Activated T-helper 1 cell treated with anti-CD3 and anti-CD28 coated beads, Interleukin-12 subunit alpha, Interleukin-12 subunit beta, Interleukin-2, Interleukin-4 antibody, amounts not matched to agents 30 ng/mL and 10 ng/mL and 1 ng/mL, durations not matched to agents 14 hours and 24 hours and 36 hours (primary cell): ENCODE measurements at regions of chr13 and their contacts with region 1.

Region 1: GRCh38 chr13:99501184-99501847 is at the start of gene TM9SF2:
- DNase-seq: peak; percentile 95
- H3K4me3 Mint-ChIP-seq: peak within 1 kb of the TSS; percentile 96
- H3K27ac Mint-ChIP-seq: peak within 1 kb of the TSS; percentile 95
- H3K4me1 Mint-ChIP-seq: peaks cover 70% of the 10 kb centered on the region
- H3K27me3 Mint-ChIP-seq: peaks cover 1% of the 10 kb centered on the region
- total RNA-seq, gene TM9SF2: 59.1 and 62.6 TPM in 2 replicates

Region 2: GRCh38 chr13:97975848-97976609 is 1525.3 kb before region 1 on chr13:
- intact Hi-C with region 1: loop called (anchors 2 kb)
- DNase-seq: peak; percentile 88
- H3K4me3 Mint-ChIP-seq: peak overlapping the region; percentile 93
- H3K27ac Mint-ChIP-seq: peak overlapping the region; percentile 98
- H3K4me1 Mint-ChIP-seq: peaks cover 33% of the 10 kb centered on the region
- H3K27me3 Mint-ChIP-seq: peaks cover 13% of the 10 kb centered on the region

Region 3: DNA sequence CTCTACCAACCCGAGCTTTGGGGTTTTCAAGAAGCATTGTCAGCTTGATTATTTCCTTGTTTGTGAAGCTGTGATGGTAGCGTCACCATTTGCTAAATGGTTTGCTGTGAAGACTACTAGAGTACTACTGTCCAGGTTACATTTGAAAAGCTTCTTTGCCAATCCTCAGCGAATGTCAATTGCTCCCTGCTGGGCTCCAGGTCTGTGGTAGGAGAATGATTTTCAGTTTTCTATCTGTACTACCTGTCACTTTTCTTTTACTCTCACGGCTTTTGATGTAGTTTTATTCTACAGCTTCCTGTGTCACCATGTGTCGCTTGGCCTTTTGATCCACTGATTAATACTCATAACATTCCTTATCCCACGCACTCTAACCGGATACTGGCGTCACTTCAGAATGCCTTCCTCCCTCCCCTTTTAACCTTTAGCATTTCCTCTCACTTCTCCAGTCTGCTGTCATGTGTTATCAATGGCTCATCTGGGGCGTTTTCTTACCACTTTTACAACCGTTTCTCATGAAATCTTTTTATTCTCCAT is 186.6 kb before region 1 on chr13:
- intact Hi-C with region 1: loop called (anchors 2 kb)
- DNase-seq: peak; percentile 54
- H3K4me3 Mint-ChIP-seq: peak overlapping the region; percentile 57
- H3K27ac Mint-ChIP-seq: peak overlapping the region; percentile 96
- H3K4me1 Mint-ChIP-seq: peaks cover 80% of the 10 kb centered on the region
- H3K27me3 Mint-ChIP-seq: no peaks in the 10 kb centered on the region

Region 4: DNA sequence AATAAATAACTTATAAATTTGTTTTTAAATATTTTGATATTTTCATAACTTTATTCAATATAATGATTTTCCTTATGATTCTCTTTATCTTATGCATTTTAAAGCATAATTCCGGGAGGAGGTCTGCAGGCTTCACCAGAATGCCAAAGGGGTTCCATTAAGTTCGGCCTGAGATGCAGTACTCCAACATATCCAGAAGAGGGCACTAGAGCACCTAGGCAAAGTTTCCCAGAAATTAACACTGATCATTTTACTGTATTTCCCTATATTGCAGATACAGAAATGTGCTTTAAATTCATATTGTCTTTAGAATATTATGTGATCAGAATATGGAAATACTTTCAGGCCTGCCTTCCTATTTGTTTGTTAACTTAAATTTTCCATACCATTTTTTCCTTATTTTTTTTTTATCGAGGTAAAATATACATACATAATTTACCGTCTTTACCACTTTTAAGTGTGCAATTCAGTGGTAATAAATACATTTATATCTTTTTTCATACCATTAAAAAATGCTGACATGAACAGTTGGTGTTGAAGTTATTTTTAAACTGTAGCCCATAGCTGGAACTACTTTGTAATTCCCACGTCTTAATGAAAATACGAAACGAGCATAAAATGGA is 58.9 kb before region 1 on chr13:
- intact Hi-C with region 1: loop called (anchors 1 kb)
- DNase-seq: peak; percentile 49
- H3K4me3 Mint-ChIP-seq: no peak overlapping the region
- H3K27ac Mint-ChIP-seq: no peak overlapping the region
- H3K4me1 Mint-ChIP-seq: peaks cover 6% of the 10 kb centered on the region
- H3K27me3 Mint-ChIP-seq: peaks cover 34% of the 10 kb centered on the region

Region 5: GRCh38 chr13:99606324-99607066 is 105.2 kb after region 1 on chr13:
- intact Hi-C with region 1: loop called (anchors 1 kb)
- DNase-seq: peak; percentile 82
- H3K4me3 Mint-ChIP-seq: peak within 1 kb of the TSS; percentile 89
- H3K27ac Mint-ChIP-seq: peak within 1 kb of the TSS; percentile 81
- H3K4me1 Mint-ChIP-seq: peaks cover 29% of the 10 kb centered on the region
- H3K27me3 Mint-ChIP-seq: peaks cover 4% of the 10 kb centered on the region

Region 6: DNA sequence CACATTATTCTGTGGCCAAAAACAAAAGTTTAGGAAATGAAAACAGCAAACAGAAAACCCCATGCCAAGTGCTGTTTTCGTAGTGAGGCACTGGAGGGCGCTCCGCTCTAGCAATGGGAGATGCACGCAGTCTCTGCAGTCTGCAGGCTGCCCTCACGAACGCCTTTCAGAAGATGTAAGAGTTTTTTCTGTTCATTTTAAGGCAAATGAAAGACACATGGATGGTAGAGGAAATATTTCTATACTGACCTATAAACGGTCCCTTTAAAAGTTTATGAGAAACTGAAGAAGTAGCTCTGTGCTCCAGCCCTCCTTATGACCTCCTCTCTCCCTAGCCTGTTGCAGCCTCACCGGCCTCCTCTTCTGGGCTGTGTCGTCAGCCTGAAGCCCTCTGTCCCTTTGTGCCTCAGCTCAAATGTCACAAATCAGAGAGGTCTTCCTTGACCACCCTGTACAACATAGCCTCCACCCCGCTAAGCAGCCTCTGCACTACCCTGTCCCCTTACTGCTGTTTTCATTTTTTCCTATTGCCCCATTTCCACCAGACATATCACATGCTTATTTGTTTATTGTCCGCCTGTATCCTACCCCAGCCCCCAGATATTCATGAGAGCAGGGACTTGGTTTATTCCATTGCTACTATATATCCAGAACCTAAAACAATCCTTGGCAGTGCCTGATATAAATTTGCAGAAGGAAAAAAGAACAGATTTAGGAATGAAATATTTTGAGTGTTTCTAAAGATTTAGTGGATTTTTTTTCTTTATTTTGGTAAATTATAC is 116.3 kb after region 1 on chr13:
- intact Hi-C with region 1: no loop called
- DNase-seq: no peak
- H3K4me3 Mint-ChIP-seq: no peak overlapping the region
- H3K27ac Mint-ChIP-seq: no peak overlapping the region
- H3K4me1 Mint-ChIP-seq: no peaks in the 10 kb centered on the region
- H3K27me3 Mint-ChIP-seq: peaks cover 7% of the 10 kb centered on the region